ENCODE measurements at regions of chr17 and their contacts with region 1.

Region 1: GRCh38 chr17:64420143-64420971 is 28.6 kb upstream of the MILR1 start:
- DNase-seq: peak; percentile 45
- H3K4me3 ChIP-seq: no peak overlapping the region
- CTCF ChIP-seq: peak; percentile 69

Region 2: GRCh38 chr17:64270885-64271284 is 149.5 kb before region 1 on chr17:
- CTCF ChIA-PET with region 1: no interaction called
- POLR2A ChIA-PET with region 1: no interaction called
- DNase-seq: no peak
- H3K4me3 ChIP-seq: no peak overlapping the region
- CTCF ChIP-seq: no peak

Region 3: DNA sequence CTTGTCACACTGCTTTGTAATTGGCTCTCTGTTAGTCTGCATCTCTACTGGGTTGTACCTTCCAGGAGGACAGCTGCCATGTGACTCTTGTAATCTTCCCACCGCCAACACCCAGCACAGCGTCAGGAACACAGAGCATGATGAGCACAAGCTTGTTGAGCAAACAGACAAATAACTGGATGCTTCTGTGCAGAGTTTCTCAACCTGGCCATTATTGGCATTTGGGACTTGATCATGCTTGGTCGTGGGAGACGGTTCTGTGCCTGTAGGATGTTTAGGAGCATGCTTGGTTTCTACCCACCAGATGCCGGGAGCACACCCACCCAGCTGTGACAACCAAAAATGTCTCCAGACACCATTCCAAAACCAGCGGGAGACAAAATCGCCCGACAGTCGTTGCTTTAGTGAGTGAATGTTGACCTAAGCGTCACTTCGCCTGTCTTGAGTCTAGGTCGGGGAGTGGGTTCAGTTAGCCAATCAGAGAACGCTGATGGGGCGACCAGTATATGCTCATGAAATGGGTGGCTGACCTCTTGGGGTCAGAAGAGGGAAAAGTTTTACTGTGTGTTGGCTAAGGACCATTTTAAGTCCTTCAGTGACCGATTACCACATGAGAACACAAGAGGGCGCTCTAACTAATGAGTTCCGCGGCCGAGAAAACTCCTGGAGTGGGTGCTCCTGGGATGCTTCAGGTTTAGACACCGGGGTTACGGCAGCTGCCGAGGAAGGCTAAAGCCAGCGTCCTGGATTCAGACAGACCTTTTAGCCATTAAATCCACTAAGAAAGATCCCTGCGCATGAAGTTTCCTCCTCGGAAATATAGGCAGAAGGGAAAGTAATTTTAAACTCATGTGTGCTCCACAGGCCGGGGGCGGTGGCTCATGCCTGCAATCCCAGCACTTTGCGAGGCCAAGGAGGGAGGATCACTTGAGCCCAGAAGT is 99.5 kb before region 1 on chr17:
- CTCF ChIA-PET with region 1: interaction called, 1,075 read pairs
- POLR2A ChIA-PET with region 1: interaction called, 3 read pairs
- DNase-seq: no peak
- H3K4me3 ChIP-seq: peak overlapping the region; percentile 8; the same call in 1 of the 2 replicates
- CTCF ChIP-seq: peak; percentile 63

Region 4: GRCh38 chr17:64406321-64407200 is 13.8 kb before region 1 on chr17:
- CTCF ChIA-PET with region 1: interaction called, 103 read pairs
- POLR2A ChIA-PET with region 1: no interaction called
- DNase-seq: no peak
- H3K4me3 ChIP-seq: no peak overlapping the region
- CTCF ChIP-seq: no peak

Region 5: DNA sequence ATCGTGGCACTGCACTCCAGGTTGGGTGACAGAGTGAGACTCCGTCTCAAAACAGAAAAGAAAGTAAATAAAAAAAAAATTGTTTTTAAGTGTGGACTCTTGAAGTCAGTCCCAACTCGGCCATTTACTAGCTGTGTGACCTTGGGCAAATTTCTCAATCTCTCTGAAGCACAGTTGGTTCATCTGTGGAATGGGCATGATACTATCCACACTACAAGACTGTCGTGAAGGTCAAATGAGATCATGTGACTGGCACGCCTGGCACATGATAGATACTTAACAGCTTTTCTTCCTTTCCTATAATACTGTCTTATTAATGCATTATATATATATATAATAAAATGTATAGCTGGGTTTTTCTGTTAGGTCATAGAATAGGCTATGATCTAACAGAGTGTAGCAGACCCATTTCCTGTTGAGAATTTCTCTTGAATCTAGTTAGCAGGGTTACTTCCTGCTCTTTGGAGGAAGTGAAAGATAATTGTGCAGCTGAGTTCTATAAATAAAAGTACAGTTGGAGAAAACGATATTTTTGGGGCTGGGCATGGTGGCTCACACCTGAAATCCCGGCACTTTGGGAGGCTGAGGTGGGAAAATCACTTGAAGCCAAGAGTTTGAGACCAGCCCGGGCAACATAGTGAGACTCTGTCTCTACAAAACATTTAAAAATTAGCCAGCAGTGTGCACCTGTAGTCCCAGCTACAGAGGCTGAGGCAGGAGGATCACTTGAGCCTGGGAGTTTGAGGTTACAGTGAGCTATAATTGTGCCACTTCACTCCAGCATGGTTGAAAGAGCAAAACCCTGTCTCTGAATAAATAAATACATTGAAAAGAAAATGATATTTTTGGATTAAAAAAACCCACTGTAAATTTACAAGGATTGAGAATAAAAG is 35.9 kb after region 1 on chr17:
- CTCF ChIA-PET with region 1: interaction called, 16 read pairs
- POLR2A ChIA-PET with region 1: no interaction called
- DNase-seq: no peak
- H3K4me3 ChIP-seq: no peak overlapping the region
- CTCF ChIP-seq: no peak

Region 6: DNA sequence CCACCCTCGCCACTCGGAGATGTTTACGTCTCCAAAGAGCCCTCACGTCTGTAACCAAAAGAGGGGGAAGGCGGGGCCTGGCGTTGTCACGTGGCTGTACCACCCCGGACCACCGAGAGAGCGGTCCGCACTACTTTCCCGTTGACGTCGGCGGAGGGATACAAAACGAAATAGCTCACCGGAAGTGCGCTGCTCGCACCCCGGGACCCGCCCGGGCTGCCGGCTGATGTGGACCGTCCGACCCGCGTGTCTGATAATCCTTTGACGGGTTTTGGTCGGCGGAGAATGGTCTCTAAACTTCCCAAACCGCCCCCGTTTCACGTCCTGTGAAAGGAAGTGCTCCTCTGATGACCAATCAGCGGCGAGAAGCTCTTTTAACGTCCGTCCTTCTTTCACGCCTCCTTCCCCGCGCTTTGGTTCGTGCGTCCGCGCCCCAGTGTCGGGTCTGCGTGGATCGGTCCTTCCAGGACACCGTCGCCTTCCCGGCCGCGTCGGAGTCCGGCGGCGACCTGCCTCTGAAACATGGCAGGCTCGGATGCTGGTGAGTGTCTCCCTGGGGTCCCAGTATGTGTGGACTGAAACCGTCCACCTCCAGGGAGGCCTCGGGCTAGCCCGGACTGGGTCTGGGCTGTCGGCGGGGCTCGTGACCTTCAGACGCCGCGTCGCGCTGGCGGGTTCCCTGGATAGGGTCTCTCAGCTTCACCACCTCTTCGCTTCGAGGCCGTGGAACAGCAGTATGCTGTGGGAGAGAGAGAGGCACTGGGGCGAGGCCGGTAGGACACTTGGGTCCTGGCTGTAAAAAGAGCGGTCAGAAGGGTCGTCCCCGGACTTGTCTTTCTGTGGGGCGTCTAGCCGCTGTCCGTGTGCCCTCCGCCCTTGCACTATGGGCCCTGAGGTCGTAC is 86.5 kb after region 1 on chr17 and contains the start of gene CEP95:
- CTCF ChIA-PET with region 1: interaction called, 88 read pairs
- POLR2A ChIA-PET with region 1: interaction called, 36 read pairs
- DNase-seq: peak; percentile 95
- H3K4me3 ChIP-seq: peak within 1 kb of the TSS; percentile 97
- CTCF ChIP-seq: no peak